ENCODE measurements at regions of chr11 and their contacts with region 1.

Region 1: DNA sequence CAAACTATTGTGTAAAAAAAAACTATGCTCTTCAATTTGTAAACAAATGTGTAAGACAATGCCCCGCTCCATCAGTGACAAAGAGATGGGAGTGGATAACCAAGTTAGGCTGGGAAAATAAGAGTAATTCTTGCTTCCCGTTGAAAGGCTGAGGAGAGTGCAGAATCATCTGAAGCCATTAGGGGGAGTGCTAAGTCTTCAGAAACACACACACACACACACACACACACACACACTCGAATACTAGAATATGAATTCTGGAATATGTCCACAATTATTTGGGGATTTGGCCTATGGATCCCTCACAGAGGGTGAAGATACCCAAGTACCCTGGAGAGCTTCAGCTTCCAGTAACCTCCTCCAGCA is 27.8 kb upstream of the ROBO3 start:
- H3K4me3 ChIP-seq: no peak overlapping the region
- H3K27ac ChIP-seq: no peak overlapping the region
- H3K4me1 ChIP-seq: no peaks in the 10 kb centered on the region
- CTCF ChIP-seq: 0 out of 2 replicates have a peak, but pooled peaks have one; percentile 54

Region 2: DNA sequence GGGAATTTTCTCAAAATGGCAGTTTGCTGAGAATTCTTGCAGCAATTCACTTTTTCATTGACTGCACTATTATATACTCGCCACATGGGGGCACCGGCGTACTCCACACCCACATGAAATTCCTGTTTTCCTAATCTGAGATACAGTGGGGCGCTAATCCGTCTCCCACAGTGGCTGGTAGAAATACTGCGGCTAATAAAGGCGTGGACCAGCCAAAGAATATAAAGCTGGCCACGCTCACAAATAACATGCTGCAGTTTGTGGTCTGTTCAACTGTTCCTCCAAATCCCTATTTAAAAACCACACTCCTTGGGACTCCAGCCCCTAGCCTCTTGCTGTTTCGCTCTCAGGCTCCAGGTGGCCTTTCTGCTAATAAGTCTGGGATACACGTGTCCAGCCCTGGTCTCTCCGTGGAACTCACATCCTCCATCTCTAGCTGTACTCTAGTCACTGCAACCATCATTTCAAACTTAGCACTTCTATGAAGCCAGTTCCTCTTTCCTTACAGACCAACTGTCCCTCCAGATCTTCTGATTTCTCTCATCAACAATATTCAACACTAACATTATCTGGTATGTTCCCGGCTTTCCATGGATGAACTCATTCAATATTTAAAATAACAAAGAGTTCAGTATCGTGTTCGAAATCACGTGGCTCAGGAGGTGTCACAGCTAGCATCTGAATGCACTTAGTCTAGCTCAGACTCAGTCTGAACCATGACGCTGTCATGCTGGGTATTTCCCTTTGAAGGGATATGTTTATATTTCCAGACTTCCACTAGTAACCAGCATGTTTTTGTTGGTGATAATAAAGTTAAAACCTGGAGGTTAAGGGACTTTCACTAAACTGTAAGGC is 192.8 kb before region 1 on chr11:
- CTCF ChIA-PET with region 1: interaction called, 53 read pairs
- POLR2A ChIA-PET with region 1: interaction called, 6 read pairs
- H3K4me3 ChIP-seq: no peak overlapping the region
- H3K27ac ChIP-seq: no peak overlapping the region
- H3K4me1 ChIP-seq: no peaks in the 10 kb centered on the region
- CTCF ChIP-seq: peak; percentile 72; the same call in 1 of the 2 replicates

Region 3: DNA sequence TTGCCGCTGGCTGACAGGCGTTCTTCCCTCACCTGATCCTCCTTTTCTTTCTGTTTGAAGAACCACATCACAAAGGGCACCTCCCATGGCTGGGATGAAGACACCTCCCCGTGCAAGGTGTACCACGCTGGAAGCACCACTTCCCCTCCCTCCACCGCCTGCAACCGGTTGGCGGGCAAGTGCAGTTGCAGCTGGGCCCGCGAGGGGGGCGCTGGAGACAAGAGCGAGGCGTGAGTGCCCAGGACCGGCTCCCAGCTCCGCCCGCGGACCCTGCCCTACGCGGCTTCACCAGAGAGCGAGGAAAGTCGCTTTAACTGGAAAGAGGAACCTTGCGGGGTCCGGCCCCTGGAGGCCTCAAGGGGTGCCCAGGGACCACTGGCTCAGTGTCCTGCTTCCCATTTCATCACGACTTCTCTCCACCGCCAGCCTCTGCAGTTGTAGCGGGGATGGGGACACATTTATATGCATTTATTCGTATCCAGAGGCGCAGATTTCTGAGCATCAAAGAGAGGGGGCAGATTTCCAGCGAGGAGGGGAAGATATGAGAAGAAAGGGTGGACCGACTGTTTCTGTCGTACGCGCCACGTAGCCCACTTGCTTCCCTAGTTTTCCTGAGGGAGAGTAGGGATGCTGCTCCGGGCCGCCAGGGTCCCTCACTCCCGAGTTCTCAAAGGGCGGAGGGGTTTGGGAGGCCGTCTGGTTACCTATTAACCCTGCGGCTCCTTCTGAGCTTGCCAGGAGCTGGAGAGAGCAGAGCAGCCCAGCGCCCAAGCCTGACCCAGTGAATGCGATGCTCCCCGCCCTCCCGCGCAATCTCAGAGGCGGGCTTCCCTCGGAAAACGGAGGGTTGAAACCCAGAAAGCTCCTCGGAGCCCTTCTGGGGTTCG is 78.9 kb before region 1 on chr11:
- CTCF ChIA-PET with region 1: interaction called, 11 read pairs
- POLR2A ChIA-PET with region 1: no interaction called
- H3K4me3 ChIP-seq: no peak overlapping the region
- H3K27ac ChIP-seq: no peak overlapping the region
- H3K4me1 ChIP-seq: no peaks in the 10 kb centered on the region
- CTCF ChIP-seq: no peak

Region 4: GRCh38 chr11:124800226-124800929 is 37.1 kb before region 1 on chr11 and contains the start of gene MSANTD2:
- CTCF ChIA-PET with region 1: interaction called, 14 read pairs
- POLR2A ChIA-PET with region 1: interaction called, 9 read pairs
- H3K4me3 ChIP-seq: peak within 1 kb of the TSS; percentile 88
- H3K27ac ChIP-seq: peak within 1 kb of the TSS; percentile 92
- H3K4me1 ChIP-seq: no peaks in the 10 kb centered on the region
- CTCF ChIP-seq: peak; percentile 10; the same call in 1 of the 2 replicates

Region 5: GRCh38 chr11:124865921-124866583 is 28.6 kb after region 1 on chr11:
- CTCF ChIA-PET with region 1: interaction called, 36 read pairs
- POLR2A ChIA-PET with region 1: no interaction called
- H3K4me3 ChIP-seq: peak overlapping the region; percentile 13
- H3K27ac ChIP-seq: no peak overlapping the region
- H3K4me1 ChIP-seq: no peaks in the 10 kb centered on the region
- CTCF ChIP-seq: peak; percentile 66; the same call in 1 of the 2 replicates